ENCODE measurements at regions of chr4 and their contacts with region 1.

Region 1: GRCh38 chr4:22515145-22515887 is 550 bp downstream of the ADGRA3 start:
- DNase-seq: peak; percentile 87
- H3K4me3 ChIP-seq: peak overlapping the region; percentile 46 to 71 (median 61)
- H3K27ac ChIP-seq: peak overlapping the region; percentile 77 to 90 (median 86)
- H3K4me1 ChIP-seq: peaks cover 0 to 37% (median 25%) of the 10 kb centered on the region in 4 donors
- H3K27me3 ChIP-seq: no peaks in the 10 kb centered on the region
- CTCF ChIP-seq: no peak
- EP300 ChIP-seq: no peak
- POLR2A ChIP-seq: no peak

Region 2: DNA sequence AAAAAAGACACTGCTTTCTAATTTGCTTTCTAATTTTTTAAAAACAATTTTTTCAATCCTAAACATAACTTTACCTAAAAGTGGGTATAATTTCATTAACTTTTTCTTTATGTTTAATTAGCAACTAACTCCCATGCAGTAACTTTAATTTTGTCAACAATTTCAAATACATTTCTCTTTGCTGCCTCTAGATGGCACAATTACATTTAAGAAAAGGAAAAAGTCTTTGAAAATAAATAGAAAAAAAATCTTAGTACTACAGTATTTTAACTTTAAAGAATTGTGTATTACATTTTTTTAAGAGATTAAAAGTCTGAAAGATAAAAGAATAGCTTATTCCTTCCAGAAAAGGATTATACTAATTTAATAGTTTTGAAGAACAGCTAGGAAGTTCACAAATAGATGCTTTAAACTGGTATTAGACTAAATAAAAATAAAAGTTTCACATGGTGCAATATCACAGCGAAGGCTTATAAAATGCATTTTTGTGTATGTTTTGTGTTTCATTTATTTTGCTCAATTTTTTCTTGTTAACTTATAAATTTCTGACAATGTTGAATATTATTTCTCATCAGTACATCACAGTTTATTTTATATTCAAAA is 104.6 kb before region 1 on chr4:
- intact Hi-C with region 1: loop called (anchors 5 kb)
- DNase-seq: no peak
- H3K4me3 ChIP-seq: no peak overlapping the region
- H3K27ac ChIP-seq: no peak overlapping the region
- H3K4me1 ChIP-seq: no peaks in the 10 kb centered on the region
- H3K27me3 ChIP-seq: no peaks in the 10 kb centered on the region
- CTCF ChIP-seq: peak in 3 of 4 experiments; percentile 41 to 60 (median 43)
- EP300 ChIP-seq: no peak
- POLR2A ChIP-seq: no peak

Region 3: GRCh38 chr4:22474636-22475310 is 40.5 kb before region 1 on chr4:
- intact Hi-C with region 1: loop called (anchors 5 kb)
- DNase-seq: no peak
- H3K4me3 ChIP-seq: no peak overlapping the region
- H3K27ac ChIP-seq: no peak overlapping the region
- H3K4me1 ChIP-seq: peaks cover 0 to 54% (median 28%) of the 10 kb centered on the region in 4 donors
- H3K27me3 ChIP-seq: no peaks in the 10 kb centered on the region
- CTCF ChIP-seq: no peak
- EP300 ChIP-seq: no peak
- POLR2A ChIP-seq: no peak

Region 4: DNA sequence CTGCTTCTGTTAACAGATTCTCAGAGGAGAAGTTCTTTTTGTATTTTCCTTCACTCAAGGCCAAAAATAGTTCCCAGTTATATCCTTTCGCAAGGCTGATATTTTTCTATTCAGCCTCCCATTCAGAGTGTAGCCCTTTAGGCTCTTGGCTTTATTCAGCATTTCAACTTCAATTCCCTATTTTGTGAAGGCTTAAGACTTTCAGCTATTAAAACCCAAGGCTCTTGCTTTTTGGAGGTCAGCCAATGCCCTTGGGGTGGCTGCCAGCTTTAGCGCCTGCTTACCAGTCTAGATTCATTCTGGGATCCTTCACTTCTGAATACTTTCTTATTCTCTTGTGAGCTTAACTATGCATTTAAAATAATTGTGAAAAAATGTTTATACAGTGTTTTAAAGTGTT is 57.9 kb after region 1 on chr4:
- intact Hi-C with region 1: loop called (anchors 2 kb)
- DNase-seq: peak; percentile 88
- H3K4me3 ChIP-seq: no peak overlapping the region
- H3K27ac ChIP-seq: peak overlapping the region; percentile 31 to 79 (median 62)
- H3K4me1 ChIP-seq: peaks cover 0 to 42% (median 28%) of the 10 kb centered on the region in 4 donors
- H3K27me3 ChIP-seq: no peaks in the 10 kb centered on the region
- CTCF ChIP-seq: no peak
- EP300 ChIP-seq: no peak
- POLR2A ChIP-seq: no peak

Region 5: DNA sequence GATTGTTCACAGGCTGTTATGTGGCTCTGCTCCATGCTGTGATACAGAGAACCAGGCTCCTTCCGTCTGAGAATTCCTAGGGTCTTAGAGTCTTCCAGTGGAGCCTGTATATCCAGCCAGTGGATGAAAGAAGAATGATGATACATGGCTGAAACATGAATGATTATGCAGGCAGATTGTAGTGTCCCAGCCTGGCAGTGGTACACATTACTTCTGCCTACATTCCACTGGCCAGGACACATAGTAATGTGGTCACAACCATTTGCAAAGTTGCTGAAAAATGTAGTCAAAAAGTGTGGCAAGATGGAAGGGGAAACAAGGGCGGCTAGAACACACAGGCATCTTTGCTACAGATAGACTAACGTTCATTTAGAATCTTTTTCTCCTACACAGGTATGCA is 172.9 kb after region 1 on chr4:
- intact Hi-C with region 1: loop called (anchors 10 kb)
- DNase-seq: no peak
- H3K4me3 ChIP-seq: no peak overlapping the region
- H3K27ac ChIP-seq: no peak overlapping the region
- H3K4me1 ChIP-seq: peaks cover 0 to 10% (median 2%) of the 10 kb centered on the region in 4 donors
- H3K27me3 ChIP-seq: no peaks in the 10 kb centered on the region
- CTCF ChIP-seq: no peak
- EP300 ChIP-seq: no peak
- POLR2A ChIP-seq: no peak

Measured in sigmoid colon (tissue), 7 donors.